CD4-positive, alpha-beta T cell (primary cell): ENCODE measurements at regions of chr17 and their contacts with region 1.

Region 1: DNA sequence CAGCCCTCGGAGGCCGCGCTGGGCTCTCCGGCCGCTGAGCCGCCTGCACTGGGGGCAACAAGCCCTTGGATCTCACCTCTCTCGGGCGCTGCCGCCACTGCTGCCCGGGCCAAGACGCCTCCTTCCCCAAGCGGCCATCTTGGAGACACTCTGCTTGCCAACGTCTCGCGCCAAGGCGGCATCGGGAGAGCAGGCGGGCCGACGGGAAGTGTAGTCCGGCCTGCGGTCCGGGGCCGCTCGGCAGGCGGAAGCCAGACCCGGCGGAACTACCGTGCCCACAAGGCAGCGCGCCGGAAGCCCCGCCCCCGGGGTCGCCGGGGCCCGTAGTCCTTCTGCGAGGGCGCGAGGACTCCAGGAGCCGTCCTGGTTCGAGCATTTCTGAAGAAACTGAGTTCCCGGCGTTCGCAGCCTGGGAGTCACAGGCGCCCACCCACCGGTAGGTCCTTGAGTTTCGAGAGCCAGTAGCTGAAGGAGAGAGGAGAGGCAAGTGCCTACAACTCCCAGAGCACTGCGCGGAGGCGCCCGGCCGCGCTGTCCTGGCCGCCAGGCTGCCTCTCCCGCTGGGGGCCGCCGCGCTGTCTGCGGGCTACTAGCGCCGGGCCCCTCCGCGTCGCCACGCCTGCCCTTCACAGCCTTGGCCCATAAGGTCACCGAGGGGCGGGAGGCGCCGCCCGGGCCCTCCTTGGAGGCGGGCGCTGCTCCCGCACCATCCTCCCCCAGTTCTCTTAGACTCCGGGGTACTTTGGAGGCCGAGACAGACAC is at the start of gene TMEM11:
- DNase-seq: peak; percentile 89 to 98 (median 94)
- ATAC-seq: peak; percentile 94
- H3K4me3 ChIP-seq: peak within 1 kb of the TSS; percentile 97
- H3K4me3 Mint-ChIP-seq: peak within 1 kb of the TSS; percentile 98
- H3K27ac ChIP-seq: peak within 1 kb of the TSS; percentile 87
- H3K27ac Mint-ChIP-seq: peak within 1 kb of the TSS; percentile 85
- H3K4me1 ChIP-seq: peaks cover 53% of the 10 kb centered on the region
- H3K4me1 Mint-ChIP-seq: peaks cover 77% of the 10 kb centered on the region
- H3K27me3 ChIP-seq: no peaks in the 10 kb centered on the region
- H3K27me3 Mint-ChIP-seq: no peaks in the 10 kb centered on the region
- CTCF ChIP-seq: no peak
- total RNA-seq, gene TMEM11: 17.8 to 19.2 TPM

Region 2: DNA sequence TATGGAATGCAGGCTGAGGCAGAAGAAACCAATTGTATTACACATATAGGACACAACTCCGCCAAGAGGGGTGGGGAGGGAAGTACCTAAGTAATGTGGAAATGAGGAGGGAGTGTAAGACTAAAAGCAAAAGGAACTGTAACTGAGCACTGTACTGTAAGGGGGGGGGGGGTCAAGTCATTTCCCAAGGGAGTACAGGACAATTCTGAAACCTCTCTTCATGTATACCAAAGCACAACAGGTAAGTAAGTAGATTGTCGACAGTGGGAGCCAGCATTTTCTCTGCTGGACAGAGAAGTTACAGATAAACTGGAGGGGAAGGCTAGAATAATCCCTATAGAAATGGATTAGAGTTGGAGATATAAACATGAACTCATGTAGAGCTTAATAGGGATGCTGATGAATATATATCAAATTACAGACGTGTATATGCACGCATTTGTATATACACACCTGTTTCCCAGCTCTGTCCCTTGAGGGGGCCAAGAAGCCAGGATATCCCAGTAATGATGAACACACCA is 177.8 kb before region 1 on chr17:
- CTCF ChIA-PET with region 1: no interaction called
- POLR2A ChIA-PET with region 1: no interaction called
- intact Hi-C with region 1: no loop called
- DNase-seq: peak in 1 of 14 experiments; percentile 20
- ATAC-seq: no peak
- H3K4me3 ChIP-seq: no peak overlapping the region
- H3K4me3 Mint-ChIP-seq: peak overlapping the region; percentile 2
- H3K27ac ChIP-seq: no peak overlapping the region
- H3K27ac Mint-ChIP-seq: peak overlapping the region; percentile 37
- H3K4me1 ChIP-seq: peaks cover 84% of the 10 kb centered on the region
- H3K4me1 Mint-ChIP-seq: peaks cover 91% of the 10 kb centered on the region
- H3K27me3 ChIP-seq: no peaks in the 10 kb centered on the region
- H3K27me3 Mint-ChIP-seq: no peaks in the 10 kb centered on the region
- CTCF ChIP-seq: no peak

Region 3: DNA sequence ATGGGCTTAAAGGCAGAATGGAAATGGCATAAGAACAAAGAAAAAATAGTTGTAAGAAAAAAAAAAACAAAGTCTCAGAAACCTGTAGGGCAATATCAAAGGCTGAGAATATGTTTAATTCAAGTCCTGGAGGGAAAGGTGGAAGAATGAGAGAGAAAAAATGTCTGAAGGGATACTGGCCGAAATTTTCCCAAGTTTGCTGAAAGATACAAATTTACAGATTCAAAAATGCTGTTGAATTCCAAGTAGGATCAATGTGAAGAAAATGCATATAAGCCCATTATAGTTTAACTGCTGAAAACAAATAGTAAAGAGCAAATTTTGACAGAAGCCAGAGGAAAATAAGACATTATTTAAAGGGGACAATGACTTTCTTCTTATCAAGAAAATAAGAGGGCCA is 164.7 kb before region 1 on chr17:
- CTCF ChIA-PET with region 1: no interaction called
- POLR2A ChIA-PET with region 1: no interaction called
- intact Hi-C with region 1: no loop called
- DNase-seq: no peak
- ATAC-seq: no peak
- H3K4me3 ChIP-seq: no peak overlapping the region
- H3K4me3 Mint-ChIP-seq: no peak overlapping the region
- H3K27ac ChIP-seq: no peak overlapping the region
- H3K27ac Mint-ChIP-seq: no peak overlapping the region
- H3K4me1 ChIP-seq: peaks cover 8% of the 10 kb centered on the region
- H3K4me1 Mint-ChIP-seq: peaks cover under 1% of the 10 kb centered on the region
- H3K27me3 ChIP-seq: peaks cover 0 to 2% of the 10 kb centered on the region in 2 experiments
- H3K27me3 Mint-ChIP-seq: peaks cover 13% of the 10 kb centered on the region
- CTCF ChIP-seq: no peak

Region 4: DNA sequence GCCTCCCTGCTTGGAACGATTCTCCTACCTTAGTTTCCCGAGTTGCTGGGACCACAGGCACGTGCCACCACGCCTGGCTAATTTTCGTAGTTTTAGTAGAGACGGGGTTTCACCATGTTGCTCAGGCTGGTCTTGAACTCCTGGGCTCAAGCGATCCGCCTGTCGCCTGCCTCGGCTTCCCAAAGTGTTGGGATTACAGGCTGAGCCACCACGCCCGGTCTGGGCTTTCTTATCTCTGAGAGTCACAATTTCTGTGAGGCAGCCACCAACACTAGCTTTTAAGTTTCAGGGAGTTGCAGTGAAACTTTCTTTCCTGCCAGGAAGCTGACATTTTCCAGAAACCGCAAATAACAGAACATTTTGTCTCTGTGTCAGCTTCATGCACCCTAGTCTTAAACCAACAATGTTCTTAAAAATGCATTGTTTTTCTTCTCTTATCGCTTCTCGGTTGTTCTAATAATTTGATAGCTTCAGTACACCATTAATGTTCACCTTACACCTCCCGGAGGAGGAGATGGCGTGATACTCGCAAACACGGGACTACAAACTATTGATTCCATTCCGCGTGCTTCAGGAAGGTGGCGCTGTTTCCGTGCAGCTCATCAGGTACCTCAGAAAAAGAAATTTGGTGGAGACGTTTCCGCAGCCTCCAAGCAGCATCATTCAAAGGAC is 94.8 kb before region 1 on chr17:
- CTCF ChIA-PET with region 1: interaction called, 6 read pairs
- POLR2A ChIA-PET with region 1: interaction called, 3 read pairs
- intact Hi-C with region 1: loop called (anchors 2 kb)
- DNase-seq: peak; percentile 52 to 88 (median 63)
- ATAC-seq: peak; percentile 98
- H3K4me3 ChIP-seq: no peak overlapping the region
- H3K4me3 Mint-ChIP-seq: no peak overlapping the region
- H3K27ac ChIP-seq: no peak overlapping the region
- H3K27ac Mint-ChIP-seq: no peak overlapping the region
- H3K4me1 ChIP-seq: peaks cover 4% of the 10 kb centered on the region
- H3K4me1 Mint-ChIP-seq: peaks cover 10% of the 10 kb centered on the region
- H3K27me3 ChIP-seq: no peaks in the 10 kb centered on the region
- H3K27me3 Mint-ChIP-seq: peaks cover 4% of the 10 kb centered on the region
- CTCF ChIP-seq: peak; percentile 80

Region 5: DNA sequence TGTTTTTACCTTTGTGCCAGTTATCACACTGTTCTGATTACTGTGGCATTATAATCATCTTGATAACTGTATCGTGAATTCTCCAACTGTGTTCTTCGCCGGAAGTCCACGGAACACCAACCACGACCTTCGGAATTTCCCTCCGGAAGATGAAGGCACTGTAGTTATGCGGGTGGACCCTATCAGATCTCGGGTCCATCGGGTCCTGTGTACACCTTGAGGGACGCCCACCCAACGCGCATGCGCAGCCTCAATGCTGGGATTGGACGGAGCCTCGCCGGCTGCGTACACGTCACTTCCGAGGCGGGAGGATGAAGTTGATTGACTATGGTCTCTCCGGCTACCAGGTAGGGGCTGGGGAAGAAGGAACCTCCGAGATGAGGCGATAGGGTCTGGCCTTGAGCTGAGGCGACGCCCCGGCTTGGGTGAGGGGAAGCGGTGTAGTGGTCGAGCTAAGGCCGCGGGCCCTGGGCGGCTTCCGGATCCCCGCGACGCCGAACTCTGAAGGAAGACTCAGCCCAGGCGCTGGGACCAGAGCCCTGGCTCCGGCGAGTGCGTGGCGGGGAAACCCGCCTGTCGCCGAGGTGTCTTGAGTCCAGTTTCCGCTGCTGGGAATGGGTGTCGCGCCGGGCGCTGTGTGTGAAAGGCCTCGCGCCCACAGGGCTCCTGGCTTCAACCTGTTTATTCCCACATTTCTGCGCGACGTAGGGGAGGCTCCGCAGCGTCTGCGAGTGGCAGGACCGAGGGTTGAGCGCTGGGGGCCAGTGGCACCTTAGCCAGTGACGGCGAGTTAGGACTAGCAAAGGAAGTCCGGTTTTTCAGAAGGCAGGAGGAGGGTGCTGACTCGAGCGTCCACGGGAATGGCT is 87.3 kb before region 1 on chr17 and contains the start of gene DHRS7B:
- CTCF ChIA-PET with region 1: interaction called, 3 read pairs
- POLR2A ChIA-PET with region 1: interaction called, 3 read pairs
- intact Hi-C with region 1: loop called (anchors 2 kb)
- DNase-seq: peak; percentile 93 to 98 (median 96)
- ATAC-seq: peak; percentile 86
- H3K4me3 ChIP-seq: peak within 1 kb of the TSS; percentile 68
- H3K4me3 Mint-ChIP-seq: peak within 1 kb of the TSS; percentile 93
- H3K27ac ChIP-seq: peak within 1 kb of the TSS; percentile 90 to 93
- H3K27ac Mint-ChIP-seq: peak within 1 kb of the TSS; percentile 93
- H3K4me1 ChIP-seq: peaks cover 18% of the 10 kb centered on the region
- H3K4me1 Mint-ChIP-seq: peaks cover 45% of the 10 kb centered on the region
- H3K27me3 ChIP-seq: no peaks in the 10 kb centered on the region
- H3K27me3 Mint-ChIP-seq: no peaks in the 10 kb centered on the region
- CTCF ChIP-seq: no peak
- total RNA-seq, gene DHRS7B: 4.9 to 5.2 TPM

Region 6: DNA sequence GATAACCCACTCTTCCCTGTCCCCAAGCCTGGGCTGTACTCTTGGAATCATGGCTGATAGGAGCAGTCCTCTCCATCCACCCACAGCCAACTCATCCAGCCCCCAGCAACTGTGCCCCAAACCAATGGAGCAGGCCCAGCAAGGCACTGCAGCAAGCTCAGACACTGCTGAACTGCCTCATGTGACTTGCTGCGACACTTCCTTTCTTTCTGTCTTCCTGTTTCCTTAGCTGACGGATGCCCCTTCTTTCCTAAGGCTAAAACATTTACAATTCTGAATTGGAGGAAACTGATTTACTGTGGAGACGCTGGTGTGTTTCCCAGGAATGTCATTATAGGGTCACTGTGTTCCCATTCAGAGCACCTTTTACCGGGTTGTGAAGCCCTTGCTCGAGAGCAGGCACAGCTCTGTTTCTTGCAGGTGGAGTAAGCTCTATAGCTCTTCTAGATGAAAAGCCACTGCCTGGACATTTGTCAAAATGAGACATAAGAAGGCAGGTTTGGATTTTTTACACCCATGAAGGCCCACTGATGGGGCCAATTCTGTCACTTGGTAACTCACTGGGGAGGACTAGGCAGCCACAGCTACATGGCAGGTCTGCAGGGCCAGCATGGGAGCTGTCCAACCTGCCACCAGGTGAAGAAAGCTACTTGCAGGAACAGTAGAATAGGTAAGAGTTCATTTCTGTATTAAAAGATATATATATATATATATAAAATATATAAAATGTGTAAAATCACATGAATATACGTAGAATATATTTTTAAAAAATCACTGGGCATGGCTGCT is 27.6 kb before region 1 on chr17:
- CTCF ChIA-PET with region 1: no interaction called
- POLR2A ChIA-PET with region 1: no interaction called
- intact Hi-C with region 1: no loop called
- DNase-seq: no peak
- ATAC-seq: no peak
- H3K4me3 ChIP-seq: no peak overlapping the region
- H3K4me3 Mint-ChIP-seq: no peak overlapping the region
- H3K27ac ChIP-seq: no peak overlapping the region
- H3K27ac Mint-ChIP-seq: no peak overlapping the region
- H3K4me1 ChIP-seq: no peaks in the 10 kb centered on the region
- H3K4me1 Mint-ChIP-seq: no peaks in the 10 kb centered on the region
- H3K27me3 ChIP-seq: no peaks in the 10 kb centered on the region
- H3K27me3 Mint-ChIP-seq: no peaks in the 10 kb centered on the region
- CTCF ChIP-seq: no peak

Region 7: DNA sequence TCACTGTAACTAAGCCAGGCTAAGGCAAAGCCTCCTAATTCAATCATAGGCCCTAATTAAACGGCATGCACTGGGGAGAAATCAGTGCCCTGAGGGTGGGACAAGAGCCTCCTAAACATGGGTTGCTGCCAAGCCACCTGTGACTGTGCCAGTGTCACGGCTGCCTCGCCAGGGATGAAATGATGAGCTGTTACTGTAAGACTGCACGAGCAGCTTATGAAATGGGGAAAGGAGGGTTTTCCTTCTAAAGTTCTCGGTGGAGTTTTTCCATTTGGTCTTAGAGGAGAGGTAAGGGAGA is 12.9 kb before region 1 on chr17:
- CTCF ChIA-PET with region 1: no interaction called
- POLR2A ChIA-PET with region 1: no interaction called
- intact Hi-C with region 1: no loop called
- DNase-seq: no peak
- ATAC-seq: no peak
- H3K4me3 ChIP-seq: no peak overlapping the region
- H3K4me3 Mint-ChIP-seq: no peak overlapping the region
- H3K27ac ChIP-seq: no peak overlapping the region
- H3K27ac Mint-ChIP-seq: peak overlapping the region; percentile 72
- H3K4me1 ChIP-seq: peaks cover 30% of the 10 kb centered on the region
- H3K4me1 Mint-ChIP-seq: peaks cover 30% of the 10 kb centered on the region
- H3K27me3 ChIP-seq: no peaks in the 10 kb centered on the region
- H3K27me3 Mint-ChIP-seq: no peaks in the 10 kb centered on the region
- CTCF ChIP-seq: no peak

Region 8: DNA sequence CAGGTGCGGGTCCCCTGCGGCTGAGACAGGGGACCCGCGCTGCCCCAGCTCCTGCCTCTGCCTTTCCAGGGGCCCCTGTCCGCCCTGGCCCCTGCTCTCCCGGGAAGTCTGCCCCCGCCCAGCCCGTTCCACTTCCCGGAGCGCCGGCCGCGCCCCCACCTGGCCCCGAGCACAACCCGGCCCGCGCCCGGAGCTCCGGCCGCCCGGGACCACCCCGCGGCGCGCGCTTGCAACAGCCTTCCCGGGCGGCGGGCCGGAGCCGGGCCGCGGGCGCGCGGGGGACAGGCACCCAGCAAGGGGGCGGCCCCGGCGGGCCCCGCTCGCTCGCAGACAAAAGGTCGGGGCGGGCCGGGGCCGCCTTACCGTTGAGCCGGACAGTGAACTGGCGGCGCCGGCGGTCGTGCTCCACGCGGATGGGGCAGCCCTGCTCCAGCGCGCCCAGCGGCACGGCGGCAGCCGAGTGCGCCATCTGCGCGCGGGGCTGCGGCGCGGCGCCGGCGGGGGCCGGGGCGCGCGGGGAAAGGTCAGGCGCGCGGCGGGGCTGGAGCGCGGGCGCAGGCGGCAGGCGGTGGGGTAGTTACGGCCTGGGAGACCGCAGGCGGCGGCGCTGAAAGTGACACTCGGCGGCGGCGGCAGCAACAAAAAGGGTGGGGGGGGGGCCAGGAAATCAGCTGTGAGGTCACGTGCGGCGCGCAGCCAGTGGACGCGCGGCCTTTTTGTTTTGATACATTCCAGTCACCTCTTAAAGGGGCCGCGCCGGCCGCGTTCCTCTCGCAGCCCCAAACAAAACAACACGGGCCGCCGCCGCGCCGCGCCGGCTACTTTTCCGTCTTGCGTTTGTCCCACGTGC is 38.8 kb after region 1 on chr17 and contains the start of gene NATD1:
- CTCF ChIA-PET with region 1: no interaction called
- POLR2A ChIA-PET with region 1: interaction called, 3 read pairs
- intact Hi-C with region 1: loop called (anchors 2 kb)
- DNase-seq: peak; percentile 64 to 92 (median 76)
- ATAC-seq: peak; percentile 80
- H3K4me3 ChIP-seq: peak within 1 kb of the TSS; percentile 67
- H3K4me3 Mint-ChIP-seq: peak within 1 kb of the TSS; percentile 93
- H3K27ac ChIP-seq: peak within 1 kb of the TSS; percentile 54 to 58
- H3K27ac Mint-ChIP-seq: peak within 1 kb of the TSS; percentile 94
- H3K4me1 ChIP-seq: peaks cover 27% of the 10 kb centered on the region
- H3K4me1 Mint-ChIP-seq: peaks cover 42% of the 10 kb centered on the region
- H3K27me3 ChIP-seq: no peaks in the 10 kb centered on the region
- H3K27me3 Mint-ChIP-seq: no peaks in the 10 kb centered on the region
- CTCF ChIP-seq: no peak
- total RNA-seq, gene NATD1: 5.9 to 6.1 TPM

Region 9: DNA sequence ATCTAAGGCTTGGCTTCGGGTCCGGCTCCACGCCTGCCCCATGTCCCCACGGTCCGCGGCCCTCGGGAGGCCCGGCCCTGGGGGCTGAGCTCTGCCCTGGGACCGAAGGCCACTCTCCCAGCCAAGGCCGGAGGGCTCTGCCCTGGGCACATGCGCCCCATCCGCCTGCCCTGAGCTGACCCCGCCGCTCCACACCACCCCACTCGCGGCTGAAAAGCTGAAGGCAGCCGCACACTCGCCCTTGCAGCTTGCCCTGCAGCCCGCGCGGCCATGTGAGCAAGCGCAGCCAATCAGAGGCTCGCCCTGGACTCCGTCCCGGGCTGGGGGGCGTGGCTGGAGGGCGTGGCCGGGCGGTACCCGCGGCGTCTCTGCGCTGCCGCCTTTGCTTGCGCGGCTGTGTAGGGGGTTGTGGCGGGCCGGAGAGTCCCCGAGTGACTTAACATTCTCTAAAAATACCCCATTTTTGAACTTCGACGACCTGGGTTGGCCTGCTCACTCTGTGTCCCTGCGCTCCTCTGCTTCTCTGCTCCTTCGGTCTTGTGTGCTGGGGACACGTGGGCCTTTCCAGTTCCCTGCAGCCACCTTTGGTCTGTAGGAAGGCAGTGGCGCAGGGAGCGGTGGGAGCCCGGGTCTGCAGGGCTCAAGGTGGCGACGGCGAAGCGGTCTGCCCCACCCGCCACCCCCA is 61.5 kb after region 1 on chr17:
- CTCF ChIA-PET with region 1: interaction called, 15 read pairs
- POLR2A ChIA-PET with region 1: interaction called, 4 read pairs
- intact Hi-C with region 1: loop called (anchors 1 to 5 kb)
- DNase-seq: peak; percentile 80 to 98 (median 93)
- ATAC-seq: peak; percentile 72
- H3K4me3 ChIP-seq: peak overlapping the region; percentile 57
- H3K4me3 Mint-ChIP-seq: peak overlapping the region; percentile 94
- H3K27ac ChIP-seq: peak overlapping the region; percentile 45 to 83
- H3K27ac Mint-ChIP-seq: peak overlapping the region; percentile 72
- H3K4me1 ChIP-seq: peaks cover 54% of the 10 kb centered on the region
- H3K4me1 Mint-ChIP-seq: peaks cover 47% of the 10 kb centered on the region
- H3K27me3 ChIP-seq: no peaks in the 10 kb centered on the region
- H3K27me3 Mint-ChIP-seq: no peaks in the 10 kb centered on the region
- CTCF ChIP-seq: no peak

Region 10: DNA sequence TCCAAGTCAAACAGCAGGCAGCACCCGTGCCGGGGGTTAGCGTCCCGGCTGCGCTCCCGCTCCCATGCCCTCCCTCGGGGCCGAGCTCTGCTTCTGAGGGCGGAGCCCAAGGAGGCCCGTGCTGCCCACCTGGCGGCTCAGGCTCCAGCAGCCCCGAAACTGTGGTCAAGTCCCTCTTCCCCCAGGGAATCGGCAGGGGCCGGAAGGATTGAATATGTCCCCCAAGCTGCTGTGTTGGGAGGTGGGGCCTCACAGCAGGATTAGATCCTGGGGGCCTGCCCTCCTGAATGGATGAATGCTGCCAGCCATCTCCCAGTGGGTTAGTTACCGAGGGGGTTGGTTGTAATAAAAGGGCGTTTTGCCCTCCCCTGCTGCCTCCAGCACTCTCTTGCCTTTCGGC is 104.2 kb after region 1 on chr17:
- CTCF ChIA-PET with region 1: no interaction called
- POLR2A ChIA-PET with region 1: no interaction called
- intact Hi-C with region 1: loop called in 1 of 2 experiments (anchors 10 kb)
- DNase-seq: peak in 1 of 14 experiments; percentile 18
- ATAC-seq: no peak
- H3K4me3 ChIP-seq: no peak overlapping the region
- H3K4me3 Mint-ChIP-seq: no peak overlapping the region
- H3K27ac ChIP-seq: no peak overlapping the region
- H3K27ac Mint-ChIP-seq: no peak overlapping the region
- H3K4me1 ChIP-seq: peaks cover 14% of the 10 kb centered on the region
- H3K4me1 Mint-ChIP-seq: peaks cover 6% of the 10 kb centered on the region
- H3K27me3 ChIP-seq: no peaks in the 10 kb centered on the region
- H3K27me3 Mint-ChIP-seq: peaks cover 4% of the 10 kb centered on the region
- CTCF ChIP-seq: no peak

Region 11: DNA sequence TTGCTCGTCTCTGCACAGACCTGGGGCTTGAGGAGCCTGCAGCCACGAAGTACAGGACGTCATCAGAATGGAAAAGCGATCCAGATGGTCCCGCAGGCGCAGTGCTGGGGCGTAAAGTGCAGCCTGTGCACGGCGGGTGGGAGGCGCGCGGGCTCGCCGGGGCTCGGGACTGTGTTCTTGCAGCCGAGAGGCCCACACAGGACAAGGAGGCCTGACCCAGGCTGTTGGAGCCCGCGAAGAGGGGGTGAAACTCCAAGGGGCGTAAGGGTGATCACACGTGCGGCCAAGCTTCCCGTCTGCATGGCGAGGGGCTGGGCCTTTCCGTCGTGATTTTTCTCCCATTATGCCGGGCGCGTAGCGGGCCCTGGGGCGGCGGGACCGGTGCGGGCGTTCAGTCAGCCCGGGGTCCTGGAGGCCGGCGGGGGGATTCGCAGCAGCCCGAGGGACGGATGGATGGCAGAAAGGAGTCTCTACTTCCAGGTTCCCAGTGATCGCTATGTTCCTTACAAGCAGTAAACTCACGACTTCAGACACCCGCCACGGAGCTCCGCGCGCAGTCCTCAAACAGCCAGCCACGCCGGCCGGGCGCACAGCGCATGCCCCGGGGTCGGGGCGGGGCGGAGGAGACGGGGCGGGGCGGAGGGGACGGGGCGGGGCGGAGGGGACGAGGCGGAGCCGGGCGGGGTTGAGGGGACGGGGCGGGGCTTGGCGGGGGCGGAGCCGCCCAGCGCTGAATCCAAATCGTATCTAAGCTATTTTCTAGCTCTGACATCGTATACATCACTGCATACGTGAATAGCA is 337.1 kb after region 1 on chr17:
- CTCF ChIA-PET with region 1: no interaction called
- POLR2A ChIA-PET with region 1: interaction called, 3 read pairs
- intact Hi-C with region 1: loop called in 1 of 2 experiments (anchors 5 kb)
- DNase-seq: peak; percentile 67 to 90 (median 80)
- ATAC-seq: peak; percentile 90
- H3K4me3 ChIP-seq: peak overlapping the region; percentile 73
- H3K4me3 Mint-ChIP-seq: peak overlapping the region; percentile 92
- H3K27ac ChIP-seq: no peak overlapping the region
- H3K27ac Mint-ChIP-seq: peak overlapping the region; percentile 39
- H3K4me1 ChIP-seq: peaks cover 14% of the 10 kb centered on the region
- H3K4me1 Mint-ChIP-seq: peaks cover 50% of the 10 kb centered on the region
- H3K27me3 ChIP-seq: peaks cover 3 to 4% of the 10 kb centered on the region in 2 experiments
- H3K27me3 Mint-ChIP-seq: peaks cover 13% of the 10 kb centered on the region
- CTCF ChIP-seq: no peak